Psoas muscle (tissue), 8 donors: ENCODE measurements at regions of chr17 and their contacts with region 1.

Region 1: DNA sequence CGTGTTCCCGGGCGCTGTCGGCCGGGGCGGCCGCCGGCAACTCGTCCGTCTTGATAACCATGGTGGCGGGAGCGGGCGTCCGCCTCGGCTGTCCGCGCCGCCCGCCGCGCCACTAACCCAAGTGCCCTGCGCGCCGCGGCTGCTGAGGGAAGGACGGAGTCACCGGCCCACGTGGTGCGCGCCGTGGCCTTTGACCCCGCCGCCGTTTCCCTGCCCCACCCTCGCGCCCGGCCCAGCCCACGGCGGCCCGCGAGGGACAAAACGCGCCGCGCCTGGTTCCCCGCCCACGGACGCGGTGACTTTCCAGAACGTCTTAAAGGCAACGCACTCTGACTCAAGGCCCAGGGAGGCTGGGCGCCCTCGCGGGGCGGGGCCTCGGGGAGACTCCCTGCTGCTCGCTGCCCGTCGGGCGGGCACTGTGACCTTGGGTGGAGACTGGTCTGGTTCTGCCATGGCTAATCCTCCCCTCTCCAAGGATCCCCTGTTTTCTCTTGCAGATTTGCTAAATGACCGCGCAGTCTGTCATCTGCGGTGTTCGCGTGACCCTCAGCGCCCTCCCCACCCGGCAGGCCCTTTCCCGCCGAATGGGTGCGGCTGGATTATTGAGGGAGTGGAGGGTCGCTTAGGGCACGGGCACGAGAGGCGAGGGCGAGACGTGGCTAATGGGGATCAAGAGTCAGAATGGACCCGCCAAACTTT is at the start of gene CLUH:
- DNase-seq: peak; percentile 98 to 99
- ATAC-seq: peak; percentile 74 to 80 (median 79)
- H3K4me3 ChIP-seq: peak within 1 kb of the TSS; percentile 82
- H3K27ac ChIP-seq: peak within 1 kb of the TSS; percentile 91
- H3K4me1 ChIP-seq: peaks cover 43% of the 10 kb centered on the region
- H3K27me3 ChIP-seq: no peaks in the 10 kb centered on the region
- CTCF ChIP-seq: no peak
- total RNA-seq, gene CLUH: 105 to 218 (median 132) TPM

Region 2: GRCh38 chr17:2416010-2416734 is 295.6 kb before region 1 on chr17:
- intact Hi-C with region 1: loop called in 1 of 2 experiments (anchors 5 kb)
- DNase-seq: peak; percentile 90 to 93
- ATAC-seq: peak; percentile 75 to 85 (median 77)
- H3K4me3 ChIP-seq: no peak overlapping the region
- H3K27ac ChIP-seq: peak overlapping the region; percentile 80
- H3K4me1 ChIP-seq: peaks cover 33% of the 10 kb centered on the region
- H3K27me3 ChIP-seq: no peaks in the 10 kb centered on the region
- CTCF ChIP-seq: peak; percentile 98

Region 3: DNA sequence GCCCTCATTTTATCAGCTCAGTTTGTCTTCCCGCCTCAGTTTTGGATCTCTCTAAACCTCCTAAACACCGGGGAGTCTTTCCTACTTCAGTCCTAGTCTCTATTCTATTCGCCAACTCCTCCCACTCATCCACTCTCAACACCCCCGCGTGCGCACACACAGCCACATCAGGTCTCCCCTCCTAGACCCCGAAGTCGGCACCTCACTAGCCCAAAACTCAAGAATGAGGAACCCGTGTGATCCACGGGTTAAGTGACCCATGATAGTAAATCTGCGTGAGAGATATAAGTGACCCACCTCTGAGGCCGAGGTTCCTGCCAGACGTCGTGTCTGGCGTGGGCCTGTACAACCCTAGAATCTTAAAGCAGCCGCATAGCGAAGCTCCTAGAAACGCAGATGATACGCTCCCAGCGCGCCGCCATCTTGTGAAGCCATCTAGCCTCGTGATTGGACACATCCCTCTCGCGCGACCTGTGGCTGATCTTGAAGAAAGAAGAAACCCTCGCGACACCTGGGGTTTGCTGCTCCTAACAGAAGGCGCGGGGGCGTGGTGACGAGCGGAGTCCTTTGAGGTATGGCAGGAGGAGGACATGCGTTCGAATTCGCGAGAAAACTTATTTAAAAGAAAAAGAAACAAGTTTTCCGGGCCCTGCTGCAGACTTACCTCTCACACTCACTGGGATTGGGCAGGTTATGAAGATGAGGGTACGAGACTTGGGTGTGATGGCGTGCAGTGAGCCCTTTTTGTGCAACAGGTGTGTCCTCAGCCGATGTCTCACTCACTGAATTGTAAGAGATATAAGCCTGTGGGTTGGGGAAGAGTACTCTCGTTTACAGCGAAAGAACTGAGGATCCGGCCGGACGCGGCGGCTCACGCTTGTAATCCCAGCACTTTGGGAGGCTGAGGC is 200.0 kb before region 1 on chr17 and contains the start of gene METTL16:
- intact Hi-C with region 1: loop called (anchors 5 to 10 kb)
- DNase-seq: peak; percentile 97
- ATAC-seq: peak; percentile 99 to 100 (median 100)
- H3K4me3 ChIP-seq: peak within 1 kb of the TSS; percentile 93
- H3K27ac ChIP-seq: peak within 1 kb of the TSS; percentile 91
- H3K4me1 ChIP-seq: peaks cover 20% of the 10 kb centered on the region
- H3K27me3 ChIP-seq: no peaks in the 10 kb centered on the region
- CTCF ChIP-seq: no peak
- total RNA-seq, gene METTL16: 20.9 to 33.0 (median 24.0) TPM

Region 4: DNA sequence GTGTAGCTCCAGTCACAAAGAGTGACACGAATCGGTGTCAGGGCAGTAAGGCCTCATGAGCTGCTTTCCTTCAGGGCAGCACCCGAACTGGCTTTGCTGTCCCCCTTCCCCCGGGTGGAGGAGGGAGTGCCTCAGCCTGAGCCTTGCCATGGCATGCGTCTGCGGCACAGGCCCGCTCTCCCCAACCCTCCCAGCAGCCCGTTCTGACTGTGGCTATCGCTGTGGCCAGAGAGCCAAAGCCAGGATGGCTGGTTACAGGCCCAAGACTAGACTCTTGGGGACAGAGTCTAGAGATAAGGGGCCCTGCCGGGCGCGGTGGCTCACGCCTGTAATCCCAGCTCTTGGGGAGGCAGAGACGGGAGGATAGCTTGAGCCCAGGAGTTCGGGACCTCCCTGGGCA is 26.1 kb before region 1 on chr17:
- intact Hi-C with region 1: loop called (anchors 2 kb)
- DNase-seq: peak in 1 of 2 donors; percentile 56
- ATAC-seq: peak in 3 of 4 donors; percentile 2 to 7 (median 4)
- H3K4me3 ChIP-seq: no peak overlapping the region
- H3K27ac ChIP-seq: peak overlapping the region; percentile 73
- H3K4me1 ChIP-seq: peaks cover 38% of the 10 kb centered on the region
- H3K27me3 ChIP-seq: no peaks in the 10 kb centered on the region
- CTCF ChIP-seq: no peak

Region 5: GRCh38 chr17:2755891-2756724 is 44.4 kb after region 1 on chr17:
- intact Hi-C with region 1: no loop called
- DNase-seq: no peak
- ATAC-seq: no peak
- H3K4me3 ChIP-seq: peak overlapping the region; percentile 49
- H3K27ac ChIP-seq: no peak overlapping the region
- H3K4me1 ChIP-seq: no peaks in the 10 kb centered on the region
- H3K27me3 ChIP-seq: peaks cover 0 to 75% (median 21%) of the 10 kb centered on the region in 3 donors
- CTCF ChIP-seq: no peak

Region 6: DNA sequence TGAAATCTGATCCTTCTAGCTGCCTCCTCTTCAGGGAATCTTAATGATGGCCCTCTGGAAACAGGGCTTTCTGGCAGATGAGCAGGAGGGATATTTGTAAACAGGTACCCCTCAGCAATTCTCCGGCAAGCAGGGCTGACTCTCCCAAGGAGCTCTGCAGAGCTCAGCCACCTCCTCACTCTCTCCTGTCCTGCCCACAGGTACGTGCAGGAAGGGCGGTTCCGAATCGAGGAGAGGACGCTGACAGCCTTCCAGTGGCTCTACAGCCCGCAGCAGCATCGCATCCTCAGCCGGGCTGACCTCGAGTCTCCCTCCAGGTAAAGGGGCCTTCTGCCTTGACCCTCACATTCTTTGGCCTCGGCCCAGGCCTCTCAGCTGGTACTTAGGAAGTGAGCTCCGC is 58.4 kb after region 1 on chr17:
- intact Hi-C with region 1: no loop called
- DNase-seq: no peak
- ATAC-seq: no peak
- H3K4me3 ChIP-seq: no peak overlapping the region
- H3K27ac ChIP-seq: no peak overlapping the region
- H3K4me1 ChIP-seq: no peaks in the 10 kb centered on the region
- H3K27me3 ChIP-seq: peaks cover 0 to 33% (median 2%) of the 10 kb centered on the region in 3 donors
- CTCF ChIP-seq: no peak